Left cardiac atrium (tissue), 4 donors: ENCODE measurements at regions of chr2 and their contacts with region 1.

Region 1: GRCh38 chr2:168136392-168136977 is 110.9 kb downstream of the STK39 start:
- DNase-seq: no peak
- ATAC-seq: peak in 1 of 2 donors; percentile 39

Region 2: GRCh38 chr2:168246483-168247340 is 110.2 kb after region 1 on chr2:
- intact Hi-C with region 1: loop called in 1 of 2 experiments (anchors 5 kb)
- DNase-seq: peak; percentile 71
- ATAC-seq: peak; percentile 79 to 85

Region 3: GRCh38 chr2:168278424-168278888 is 142.0 kb after region 1 on chr2:
- intact Hi-C with region 1: no loop called
- DNase-seq: no peak
- ATAC-seq: no peak

Region 4: DNA sequence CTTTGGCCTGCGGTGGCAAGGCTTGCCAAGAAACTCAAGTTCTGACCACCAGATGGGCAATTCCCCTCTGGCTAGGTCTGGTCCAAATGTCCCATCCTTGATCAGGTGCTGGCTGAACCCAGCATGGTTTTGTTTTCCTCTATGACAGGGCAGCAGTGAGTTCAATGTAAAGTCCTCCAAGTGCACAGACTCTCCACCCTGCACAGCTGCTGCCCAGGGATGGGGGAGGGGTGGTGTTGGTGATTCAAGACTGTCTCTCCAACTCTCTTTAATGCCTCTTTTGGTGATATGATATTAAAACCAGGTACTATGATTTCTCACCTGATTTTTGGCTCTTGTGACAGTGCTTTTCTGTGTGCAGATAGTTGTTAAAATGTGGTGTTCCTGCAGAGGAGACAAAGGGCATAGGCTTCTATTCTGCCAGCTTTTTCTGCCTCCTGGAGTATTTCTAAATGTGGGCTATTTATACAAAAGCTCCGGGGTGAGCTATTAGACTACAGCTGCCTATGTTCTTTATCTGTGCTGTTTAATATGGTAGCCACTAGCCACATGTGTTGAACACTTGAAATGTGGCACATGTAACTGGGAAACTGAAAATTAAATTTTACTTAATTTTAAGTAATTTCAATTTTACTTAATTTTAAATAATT is 174.9 kb after region 1 on chr2:
- intact Hi-C with region 1: loop called in 1 of 2 experiments (anchors 10 kb)
- DNase-seq: no peak
- ATAC-seq: peak in 1 of 2 donors; percentile 27